ENCODE measurements at regions of chr18 and their contacts with region 1.

Region 1: DNA sequence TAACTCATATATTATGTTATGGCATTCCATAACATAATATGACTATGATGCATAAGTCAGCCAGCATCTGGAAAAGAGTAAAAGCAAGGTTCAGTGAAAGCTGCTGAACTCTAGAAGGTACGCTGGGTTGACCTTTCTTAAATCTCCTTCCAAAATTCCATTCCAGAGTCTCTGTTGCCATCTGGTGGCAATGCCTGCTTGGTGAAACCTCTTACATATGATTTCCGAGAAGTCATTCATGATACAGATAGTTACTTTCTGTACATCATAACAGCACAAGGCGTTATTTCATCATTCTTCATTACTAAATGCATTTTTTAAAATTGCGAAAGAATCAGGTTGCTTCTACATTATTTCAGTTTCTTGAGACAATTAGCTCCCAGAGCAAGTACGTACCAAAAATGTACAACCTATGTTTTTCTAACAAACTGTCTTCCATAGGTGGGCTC is 7.0 kb upstream of the EPG5 start:
- DNase-seq: no peak

Region 2: DNA sequence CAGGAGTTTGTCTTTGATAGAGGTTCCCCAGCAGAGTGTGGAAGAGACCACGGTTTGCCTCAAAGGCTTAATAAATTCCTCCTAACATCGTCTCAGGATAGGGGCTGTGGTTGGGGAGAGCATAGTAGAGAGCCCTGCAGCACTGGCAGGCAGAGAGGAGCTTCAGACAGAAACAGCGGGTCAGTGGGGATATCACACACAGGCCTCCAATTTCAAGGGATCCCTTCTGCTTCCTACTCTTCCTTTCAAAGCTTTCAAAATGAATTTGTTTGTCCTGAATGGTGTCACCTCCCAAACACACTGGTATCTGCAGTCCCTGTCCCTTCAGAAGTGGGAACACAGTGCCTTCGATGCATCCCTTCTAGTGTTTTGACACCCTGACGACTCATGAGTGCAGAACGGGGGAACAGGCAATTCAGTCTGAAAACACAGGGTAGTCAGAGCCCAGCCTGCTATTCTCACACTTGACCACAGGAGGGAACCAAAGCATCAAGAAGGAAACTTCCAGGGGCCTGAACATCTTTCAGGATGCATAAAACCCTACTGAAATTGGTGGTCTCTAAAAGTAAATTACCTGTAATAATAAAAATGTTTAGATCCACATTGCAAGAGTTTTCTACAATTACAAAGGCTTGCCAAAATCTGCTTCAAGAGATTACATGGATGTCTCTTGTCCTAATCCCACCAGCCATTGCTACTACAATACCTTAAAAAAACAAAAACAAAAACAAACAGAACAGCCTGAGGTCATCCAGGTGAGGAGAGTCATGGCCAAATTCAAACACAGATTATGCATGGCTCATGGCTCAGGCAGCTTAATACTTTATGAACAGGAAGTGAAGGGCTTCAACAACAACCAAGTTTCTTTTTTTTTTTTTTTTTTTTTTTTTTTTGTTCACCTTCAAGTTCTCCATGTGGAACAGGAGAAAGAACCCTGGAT is 309.0 kb before region 1 on chr18:
- intact Hi-C with region 1: loop called (anchors 10 kb)
- DNase-seq: no peak

Region 3: DNA sequence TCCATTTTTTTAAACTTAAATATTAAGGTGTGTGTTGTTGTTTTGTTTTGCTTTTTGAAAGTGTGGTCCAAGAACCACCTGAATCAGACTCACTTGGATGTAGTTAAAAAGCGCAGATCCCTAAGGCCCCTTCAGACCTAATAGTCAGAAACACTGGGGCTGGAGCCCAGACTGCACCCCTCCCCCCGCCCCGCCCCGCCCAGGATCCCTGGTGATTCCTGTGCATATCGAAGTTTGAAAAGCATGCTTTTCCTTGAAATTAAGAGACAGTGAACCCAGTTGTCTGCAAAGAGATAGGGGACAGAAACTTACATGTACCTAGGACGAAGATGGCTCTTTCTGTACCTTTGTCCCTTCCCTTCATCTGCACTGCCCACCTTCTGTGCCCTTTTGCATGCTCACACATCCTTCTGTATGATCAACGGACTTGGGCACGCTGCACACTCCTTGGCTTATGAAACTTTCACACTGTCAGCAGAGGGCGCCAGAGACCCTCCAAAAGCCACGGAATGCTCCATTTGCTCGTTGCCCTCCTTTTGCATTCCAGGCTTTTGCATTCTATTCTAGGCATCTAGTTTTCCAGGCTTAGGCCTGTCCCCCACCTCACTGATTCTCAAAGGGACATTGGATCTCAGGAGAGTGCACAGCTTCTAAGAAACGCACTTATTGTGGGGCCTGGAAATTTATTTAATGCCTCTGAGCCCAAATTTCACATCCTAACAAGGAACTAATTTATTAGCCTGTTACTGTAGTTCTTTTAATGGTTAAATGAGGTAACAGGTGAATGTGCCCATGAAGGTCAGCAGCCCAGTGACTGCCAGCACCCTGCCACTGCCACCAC is 282.9 kb before region 1 on chr18:
- intact Hi-C with region 1: loop called (anchors 5 kb)
- DNase-seq: peak; percentile 82

Region 4: GRCh38 chr18:46019941-46020340 is 45.8 kb after region 1 on chr18:
- intact Hi-C with region 1: no loop called
- DNase-seq: no peak

Measured in cardiac septum (tissue), 1 donor.